ENCODE measurements at regions of chr4 and their contacts with region 1.

Region 1: DNA sequence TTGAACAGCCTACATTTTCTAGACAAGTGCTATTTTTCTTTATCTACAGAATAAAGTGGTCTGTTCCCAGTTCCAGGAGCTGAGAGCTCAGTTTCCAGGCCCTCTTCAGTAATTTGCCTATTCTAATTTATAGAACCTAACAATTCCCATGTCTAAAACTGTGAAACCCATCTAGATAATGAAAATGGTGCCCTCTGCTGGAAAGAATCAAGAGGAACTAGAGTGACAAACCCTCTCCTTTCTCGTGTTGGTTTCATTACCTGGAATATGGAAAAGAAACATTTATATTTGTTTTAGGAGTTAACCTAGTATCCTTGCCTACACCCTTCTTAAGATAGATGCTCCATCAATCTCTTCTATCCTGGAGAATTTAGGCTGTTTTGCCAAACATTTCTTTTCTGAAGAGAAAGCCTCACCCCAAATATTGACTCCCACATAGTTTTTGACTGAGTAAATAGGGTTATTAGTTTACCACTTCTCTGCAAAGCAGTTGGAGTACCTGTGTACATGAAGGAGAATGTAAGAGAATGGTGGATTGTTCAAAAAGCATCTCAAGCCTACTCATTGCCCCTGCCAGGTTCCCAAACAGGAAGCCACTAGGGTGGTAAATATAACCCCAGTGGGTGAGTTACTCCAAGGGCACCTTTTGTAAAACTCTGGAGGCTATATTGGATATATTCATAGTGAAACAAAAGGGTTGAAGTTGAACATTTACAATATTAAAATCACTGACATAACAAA is 121.6 kb downstream of the RASL11B start:
- DNase-seq: peak; percentile 35
- H3K4me3 ChIP-seq: no peak overlapping the region
- H3K27ac ChIP-seq: no peak overlapping the region
- H3K4me1 ChIP-seq: no peaks in the 10 kb centered on the region
- H3K27me3 ChIP-seq: no peaks in the 10 kb centered on the region
- CTCF ChIP-seq: peak; percentile 75

Region 2: DNA sequence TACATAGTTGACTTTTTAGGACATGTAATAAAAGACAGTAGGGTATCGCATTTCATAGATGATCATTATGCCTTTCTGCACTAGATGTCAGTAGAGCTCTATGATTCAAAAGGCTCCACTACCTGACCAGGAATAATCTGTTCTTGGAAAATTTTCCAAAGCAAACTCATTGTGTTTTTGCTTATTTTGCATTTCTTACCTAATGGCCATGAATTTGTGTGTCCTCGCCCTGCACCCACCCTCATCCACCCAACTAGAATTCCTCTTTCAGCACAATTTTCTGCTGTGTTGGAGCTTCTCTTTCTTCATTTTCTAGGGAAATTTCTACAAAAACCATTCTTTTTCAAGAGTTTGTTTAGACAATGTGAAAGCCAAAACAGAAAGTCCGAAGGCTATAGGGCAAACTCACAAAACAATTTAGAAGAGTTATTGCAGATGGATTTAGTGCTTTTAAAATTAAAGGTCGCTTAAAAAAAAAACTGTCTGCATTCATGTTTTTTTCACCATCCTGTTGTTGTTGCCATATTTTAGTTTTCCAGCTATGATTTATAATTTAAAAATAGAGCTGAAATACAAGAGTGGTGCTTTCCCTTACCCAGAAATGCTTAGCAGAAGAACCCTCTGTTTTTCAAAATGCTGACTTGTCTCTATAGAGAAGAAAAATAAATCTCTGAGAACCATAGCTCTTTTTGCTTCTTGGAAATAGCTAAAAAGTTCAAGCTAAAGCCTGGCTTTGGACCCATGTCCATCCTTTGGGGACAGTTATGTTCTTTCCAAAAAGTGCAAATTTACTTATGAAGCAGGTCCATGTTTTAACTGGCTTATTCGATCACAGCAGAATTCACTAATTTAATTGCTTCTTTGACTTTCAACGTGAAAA is 748.9 kb before region 1 on chr4:
- intact Hi-C with region 1: loop called (anchors 10 kb)
- DNase-seq: no peak
- H3K4me3 ChIP-seq: no peak overlapping the region
- H3K27ac ChIP-seq: no peak overlapping the region
- H3K4me1 ChIP-seq: no peaks in the 10 kb centered on the region
- H3K27me3 ChIP-seq: no peaks in the 10 kb centered on the region
- CTCF ChIP-seq: no peak

Region 3: DNA sequence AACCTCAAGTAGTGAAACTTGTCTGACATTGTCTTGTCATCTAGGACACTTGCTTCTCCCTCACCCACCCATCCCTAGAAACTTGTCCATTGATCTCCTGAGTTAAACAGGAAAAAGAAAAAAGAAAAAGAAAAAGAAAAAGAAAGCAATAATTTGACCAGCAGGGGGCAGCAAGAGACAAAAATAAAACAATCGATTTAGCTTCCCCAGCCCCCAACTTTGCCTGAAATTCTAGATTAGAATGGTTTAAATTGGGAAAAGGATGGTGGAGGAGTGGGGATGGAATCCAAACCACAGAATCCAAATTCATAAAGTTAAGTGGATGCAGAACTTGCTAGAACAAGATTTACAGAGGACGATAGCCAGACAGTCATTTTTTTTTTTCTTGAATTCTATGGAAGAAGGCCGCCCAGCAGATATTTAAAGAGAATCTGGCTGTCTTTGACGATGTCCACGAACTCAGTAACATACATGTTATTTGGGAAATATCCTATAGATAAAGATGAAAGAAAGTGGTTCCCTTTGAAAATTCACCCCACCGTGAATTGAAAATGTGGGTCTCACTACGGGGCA is 607.5 kb before region 1 on chr4:
- intact Hi-C with region 1: loop called (anchors 2 kb)
- DNase-seq: peak; percentile 24
- H3K4me3 ChIP-seq: no peak overlapping the region
- H3K27ac ChIP-seq: no peak overlapping the region
- H3K4me1 ChIP-seq: no peaks in the 10 kb centered on the region
- H3K27me3 ChIP-seq: no peaks in the 10 kb centered on the region
- CTCF ChIP-seq: peak; percentile 55

Region 4: GRCh38 chr4:52545099-52546069 is 438.3 kb before region 1 on chr4:
- intact Hi-C with region 1: loop called (anchors 2 kb)
- DNase-seq: peak; percentile 75
- H3K4me3 ChIP-seq: no peak overlapping the region
- H3K27ac ChIP-seq: no peak overlapping the region
- H3K4me1 ChIP-seq: no peaks in the 10 kb centered on the region
- H3K27me3 ChIP-seq: no peaks in the 10 kb centered on the region
- CTCF ChIP-seq: peak; percentile 88

Region 5: GRCh38 chr4:52780206-52780605 is 203.5 kb before region 1 on chr4:
- intact Hi-C with region 1: loop called (anchors 10 kb)
- DNase-seq: no peak
- H3K4me3 ChIP-seq: no peak overlapping the region
- H3K27ac ChIP-seq: no peak overlapping the region
- H3K4me1 ChIP-seq: no peaks in the 10 kb centered on the region
- H3K27me3 ChIP-seq: no peaks in the 10 kb centered on the region
- CTCF ChIP-seq: no peak

Region 6: DNA sequence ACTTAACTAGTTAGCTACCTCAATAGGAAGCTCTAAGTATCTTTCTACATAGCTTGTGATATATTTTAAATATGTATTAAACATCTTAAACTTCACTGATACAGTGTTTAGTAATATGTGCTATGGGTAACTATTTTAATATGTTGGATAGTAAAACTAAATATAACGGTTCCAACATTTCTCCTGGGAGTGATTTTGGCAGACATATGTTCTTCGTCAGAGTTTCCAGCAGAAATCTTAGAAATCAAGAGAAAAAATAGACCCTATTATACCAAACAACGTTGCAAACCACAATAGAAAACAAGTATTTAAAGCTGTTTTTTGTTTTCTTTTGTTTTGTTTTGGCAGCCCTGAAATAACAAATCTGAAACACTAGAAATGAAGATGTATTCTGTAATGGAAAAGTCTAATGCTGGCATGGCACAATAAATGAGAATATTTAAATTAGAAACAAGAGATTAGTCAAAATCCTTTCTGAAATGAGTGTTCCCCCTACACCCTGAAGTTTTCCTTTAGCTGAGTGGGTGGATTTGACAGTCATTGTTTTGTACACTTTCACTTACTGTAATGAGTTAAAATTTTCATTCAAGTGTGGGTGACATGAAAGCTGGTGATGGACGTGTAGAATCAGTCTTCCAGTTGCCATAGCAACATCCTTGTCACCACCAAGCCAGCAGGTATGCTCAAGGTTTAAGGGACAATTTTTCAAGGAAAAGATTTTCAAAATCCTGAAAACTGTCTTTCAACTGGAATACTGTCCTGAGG is 148.6 kb after region 1 on chr4:
- intact Hi-C with region 1: no loop called
- DNase-seq: no peak
- H3K4me3 ChIP-seq: no peak overlapping the region
- H3K27ac ChIP-seq: no peak overlapping the region
- H3K4me1 ChIP-seq: no peaks in the 10 kb centered on the region
- H3K27me3 ChIP-seq: no peaks in the 10 kb centered on the region
- CTCF ChIP-seq: no peak